ENCODE measurements at regions of chr1 and their contacts with region 1.

Region 1: DNA sequence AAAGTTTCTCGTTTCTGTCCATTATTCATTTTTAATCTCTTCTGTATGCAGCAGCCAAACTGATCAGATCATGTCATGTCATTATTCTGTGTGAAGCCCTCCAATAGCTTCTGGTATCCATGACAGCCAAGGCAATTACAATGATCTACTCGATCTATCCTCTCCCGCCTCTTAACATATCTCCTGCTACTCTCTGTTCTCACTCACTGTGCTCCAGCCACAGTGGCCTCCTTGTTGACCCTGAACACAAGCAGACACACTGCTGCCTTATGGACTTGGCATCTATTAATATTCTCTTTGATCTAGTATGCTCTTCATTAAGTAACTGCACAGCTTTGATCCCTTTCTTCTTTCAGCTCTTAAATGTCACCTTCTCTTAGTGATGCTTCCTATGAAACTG is 59.5 kb downstream of the TPR start:
- DNase-seq: no peak
- ATAC-seq: no peak

Region 2: DNA sequence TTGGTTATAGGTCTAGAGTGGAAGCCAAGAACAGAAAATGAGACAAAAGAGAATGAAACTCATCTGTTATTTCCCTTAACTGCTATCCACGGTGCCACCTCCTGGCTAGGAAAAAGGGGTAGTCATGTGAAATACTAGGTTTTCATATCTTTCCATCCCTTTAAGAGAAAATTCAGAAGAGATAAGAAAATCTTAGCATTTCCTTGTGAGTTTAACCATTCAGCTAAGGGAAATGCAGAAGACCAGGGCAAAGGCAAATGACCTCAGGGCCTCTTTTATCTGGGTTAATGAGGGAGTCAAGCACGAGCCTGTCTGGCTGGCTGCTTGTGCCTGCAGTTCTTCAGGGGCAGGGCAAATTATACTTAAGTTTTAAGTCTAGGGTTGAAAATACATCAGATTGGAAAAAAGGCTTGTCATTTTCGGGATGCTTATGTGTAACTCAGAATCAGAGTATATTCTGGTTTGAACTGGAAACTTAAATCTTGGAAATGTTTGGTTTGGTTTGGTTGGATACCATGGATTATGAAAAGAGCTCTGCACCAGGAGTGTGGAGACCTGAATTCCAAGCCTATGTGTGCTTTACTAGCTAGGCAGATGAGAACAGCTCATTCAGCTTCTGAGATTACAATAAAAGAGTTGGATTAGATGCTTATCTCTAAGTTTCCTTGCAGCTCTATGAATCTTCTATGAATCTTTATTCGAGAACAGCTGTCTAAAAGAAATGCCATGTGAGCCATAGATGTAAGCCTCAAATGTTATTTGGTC is 1361.2 kb before region 1 on chr1:
- intact Hi-C with region 1: loop called (anchors 5 kb)
- DNase-seq: no peak
- ATAC-seq: peak; percentile 28

Measured in sciatic nerve (tissue), 2 donors.